CD4-positive, alpha-beta T cell (primary cell): ENCODE measurements at regions of chr1 and their contacts with region 1.

Region 1: DNA sequence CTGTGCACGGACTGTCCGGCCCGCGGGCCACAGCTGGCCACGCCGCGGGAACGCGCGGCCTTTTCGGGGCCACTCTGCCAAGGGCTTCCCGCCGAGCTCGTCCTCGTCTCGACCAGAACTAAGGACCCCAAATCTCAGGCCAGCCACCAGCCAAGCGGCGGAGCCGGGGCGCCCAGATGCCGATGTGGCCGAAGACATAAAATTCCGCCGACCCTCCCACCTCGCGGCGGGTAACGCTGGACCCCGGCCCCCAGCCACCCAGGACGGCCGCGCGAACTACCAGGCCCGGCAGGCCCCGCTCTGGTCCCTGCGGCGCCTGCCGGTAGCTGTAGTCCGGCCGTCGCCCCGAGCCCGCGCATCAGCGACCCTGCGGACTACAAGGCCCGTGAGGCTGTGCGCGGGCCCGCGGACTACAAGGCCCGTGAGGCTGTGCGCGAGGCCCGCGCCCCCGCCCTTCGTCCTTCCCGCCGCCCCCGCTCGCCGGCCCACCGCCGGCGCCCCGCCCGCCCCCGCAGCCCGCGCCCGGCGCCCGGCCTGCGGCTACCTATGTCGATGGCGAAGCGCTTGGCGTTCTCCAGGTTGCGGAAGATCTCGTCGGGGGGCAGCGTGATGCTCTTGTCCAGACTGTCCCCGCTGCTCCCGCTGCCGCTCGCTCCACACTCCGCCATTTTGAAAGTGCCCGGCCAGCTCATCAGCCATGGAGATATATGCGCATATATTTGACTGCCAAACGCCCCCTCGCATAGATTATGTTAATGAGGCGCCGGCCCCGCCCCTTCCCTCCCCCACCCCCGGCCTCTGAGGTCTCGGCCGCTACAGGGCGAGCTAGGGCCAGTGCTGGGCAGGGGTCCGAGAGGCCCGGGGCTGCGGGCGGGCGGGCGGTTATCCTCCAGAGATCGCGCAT is at the start of gene PANK4:
- DNase-seq: peak; percentile 76 to 96 (median 87)
- ATAC-seq: peak; percentile 89
- H3K4me3 ChIP-seq: peak within 1 kb of the TSS; percentile 84
- H3K4me3 Mint-ChIP-seq: peak within 1 kb of the TSS; percentile 90
- H3K27ac ChIP-seq: peak within 1 kb of the TSS; percentile 76
- H3K27ac Mint-ChIP-seq: peak within 1 kb of the TSS; percentile 91
- H3K4me1 ChIP-seq: peaks cover 75% of the 10 kb centered on the region
- H3K4me1 Mint-ChIP-seq: peaks cover 55% of the 10 kb centered on the region
- H3K27me3 ChIP-seq: peaks cover 19 to 23% of the 10 kb centered on the region in 2 experiments
- H3K27me3 Mint-ChIP-seq: peaks cover 19% of the 10 kb centered on the region
- CTCF ChIP-seq: no peak
- total RNA-seq, gene PANK4: 42.9 to 47.0 TPM

Region 2: GRCh38 chr1:1890506-1891348 is 635.4 kb before region 1 on chr1 and contains the start of gene GNB1:
- CTCF ChIA-PET with region 1: no interaction called
- POLR2A ChIA-PET with region 1: no interaction called
- intact Hi-C with region 1: no loop called
- DNase-seq: peak; percentile 73 to 97 (median 86)
- ATAC-seq: peak; percentile 67
- H3K4me3 ChIP-seq: peak within 1 kb of the TSS; percentile 77
- H3K4me3 Mint-ChIP-seq: peak within 1 kb of the TSS; percentile 92
- H3K27ac ChIP-seq: peak within 1 kb of the TSS; percentile 82 to 84
- H3K27ac Mint-ChIP-seq: peak within 1 kb of the TSS; percentile 98
- H3K4me1 ChIP-seq: peaks cover 77% of the 10 kb centered on the region
- H3K4me1 Mint-ChIP-seq: peaks cover 59% of the 10 kb centered on the region
- H3K27me3 ChIP-seq: no peaks in the 10 kb centered on the region
- H3K27me3 Mint-ChIP-seq: no peaks in the 10 kb centered on the region
- CTCF ChIP-seq: no peak
- total RNA-seq, gene GNB1: 138 to 149 TPM

Region 3: DNA sequence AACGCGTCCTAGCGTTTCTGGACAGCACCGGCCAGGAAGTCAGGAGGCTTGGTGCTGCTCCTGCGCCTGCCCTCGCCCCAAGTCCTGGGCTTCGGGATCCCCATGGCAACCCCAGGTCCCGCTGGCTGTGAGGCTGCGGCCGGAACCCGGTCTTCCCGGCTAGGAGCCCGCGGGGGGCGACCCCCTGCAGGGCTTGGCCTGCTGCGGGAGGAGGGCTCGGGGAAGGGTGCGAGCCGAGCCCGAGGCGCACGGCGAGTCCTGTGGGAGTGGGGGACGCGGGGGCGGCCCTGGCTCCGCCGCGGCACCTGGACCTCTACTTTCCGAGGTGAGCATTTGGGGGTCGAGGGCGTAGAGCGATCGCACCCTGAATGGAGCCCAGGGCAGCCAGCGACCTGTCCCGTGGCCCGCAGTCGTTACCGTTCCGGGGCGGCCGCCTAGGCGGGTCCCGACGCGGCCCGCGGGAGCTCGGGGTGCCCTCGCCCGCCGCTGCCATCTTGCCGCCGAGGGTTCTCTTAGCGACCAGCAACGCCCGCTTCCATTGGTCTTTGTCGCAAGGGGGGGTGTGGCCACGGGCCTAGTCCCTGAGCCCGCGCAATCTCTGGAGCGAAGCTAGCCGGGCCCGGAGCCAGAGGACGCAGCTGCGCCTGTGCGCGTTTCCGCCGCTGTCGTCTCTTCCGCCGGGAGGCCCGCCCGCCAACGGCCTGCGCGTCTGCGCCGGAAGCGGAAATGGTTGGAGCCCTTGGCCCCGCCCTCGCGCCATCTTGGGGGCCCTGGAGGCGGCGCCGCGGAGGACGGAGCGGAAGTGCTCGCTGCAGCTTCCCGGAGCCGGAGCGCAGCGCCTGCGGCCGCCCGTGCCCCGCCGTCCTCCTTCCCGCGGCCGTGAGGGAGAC is 134.9 kb before region 1 on chr1 and contains the starts of genes MORN1 and RER1:
- CTCF ChIA-PET with region 1: interaction called, 3 read pairs
- POLR2A ChIA-PET with region 1: interaction called, 19 read pairs
- intact Hi-C with region 1: loop called in 1 of 2 experiments (anchors 1 kb)
- DNase-seq: peak; percentile 97 to 100 (median 99)
- ATAC-seq: peak; percentile 95
- H3K4me3 ChIP-seq: peak within 1 kb of the TSS; percentile 64
- H3K4me3 Mint-ChIP-seq: peak within 1 kb of the TSS; percentile 95
- H3K27ac ChIP-seq: peak within 1 kb of the TSS; percentile 60 to 63
- H3K27ac Mint-ChIP-seq: peak within 1 kb of the TSS; percentile 88
- H3K4me1 ChIP-seq: peaks cover 45% of the 10 kb centered on the region
- H3K4me1 Mint-ChIP-seq: peaks cover 31% of the 10 kb centered on the region
- H3K27me3 ChIP-seq: no peaks in the 10 kb centered on the region
- H3K27me3 Mint-ChIP-seq: no peaks in the 10 kb centered on the region
- CTCF ChIP-seq: no peak
- total RNA-seq, gene MORN1: 5.3 to 6.5 TPM
- total RNA-seq, gene RER1: 57.9 to 60.7 TPM

Region 4: GRCh38 chr1:2459757-2460156 is 66.4 kb before region 1 on chr1:
- CTCF ChIA-PET with region 1: no interaction called
- POLR2A ChIA-PET with region 1: no interaction called
- intact Hi-C with region 1: no loop called
- DNase-seq: no peak
- ATAC-seq: no peak
- H3K4me3 ChIP-seq: no peak overlapping the region
- H3K4me3 Mint-ChIP-seq: no peak overlapping the region
- H3K27ac ChIP-seq: no peak overlapping the region
- H3K27ac Mint-ChIP-seq: no peak overlapping the region
- H3K4me1 ChIP-seq: no peaks in the 10 kb centered on the region
- H3K4me1 Mint-ChIP-seq: no peaks in the 10 kb centered on the region
- H3K27me3 ChIP-seq: peaks cover 0 to 9% of the 10 kb centered on the region in 2 experiments
- H3K27me3 Mint-ChIP-seq: peaks cover 6% of the 10 kb centered on the region
- CTCF ChIP-seq: no peak

Region 5: GRCh38 chr1:2514863-2515762 is 11.1 kb before region 1 on chr1:
- CTCF ChIA-PET with region 1: no interaction called
- POLR2A ChIA-PET with region 1: no interaction called
- intact Hi-C with region 1: no loop called
- DNase-seq: no peak
- ATAC-seq: no peak
- H3K4me3 ChIP-seq: no peak overlapping the region
- H3K4me3 Mint-ChIP-seq: no peak overlapping the region
- H3K27ac ChIP-seq: no peak overlapping the region
- H3K27ac Mint-ChIP-seq: no peak overlapping the region
- H3K4me1 ChIP-seq: no peaks in the 10 kb centered on the region
- H3K4me1 Mint-ChIP-seq: no peaks in the 10 kb centered on the region
- H3K27me3 ChIP-seq: no peaks in the 10 kb centered on the region
- H3K27me3 Mint-ChIP-seq: no peaks in the 10 kb centered on the region
- CTCF ChIP-seq: no peak

Region 6: GRCh38 chr1:2545759-2546514 is 19.8 kb after region 1 on chr1:
- CTCF ChIA-PET with region 1: interaction called, 37 read pairs
- POLR2A ChIA-PET with region 1: interaction called, 164 read pairs
- intact Hi-C with region 1: loop called (anchors 1 kb)
- DNase-seq: peak; percentile 82 to 97 (median 88)
- ATAC-seq: peak; percentile 45
- H3K4me3 ChIP-seq: peak overlapping the region; percentile 81
- H3K4me3 Mint-ChIP-seq: peak overlapping the region; percentile 95
- H3K27ac ChIP-seq: peak overlapping the region; percentile 96 to 99
- H3K27ac Mint-ChIP-seq: peak overlapping the region; percentile 99
- H3K4me1 ChIP-seq: peaks cover 70% of the 10 kb centered on the region
- H3K4me1 Mint-ChIP-seq: peaks cover 38% of the 10 kb centered on the region
- H3K27me3 ChIP-seq: peaks cover 0 to 2% of the 10 kb centered on the region in 2 experiments
- H3K27me3 Mint-ChIP-seq: no peaks in the 10 kb centered on the region
- CTCF ChIP-seq: no peak

Region 7: GRCh38 chr1:2575801-2576663 is 49.9 kb after region 1 on chr1:
- CTCF ChIA-PET with region 1: interaction called, 7 read pairs
- POLR2A ChIA-PET with region 1: interaction called, 3 read pairs
- intact Hi-C with region 1: loop called in 1 of 2 experiments (anchors 2 kb)
- DNase-seq: peak in 1 of 14 experiments; percentile 40
- ATAC-seq: no peak
- H3K4me3 ChIP-seq: no peak overlapping the region
- H3K4me3 Mint-ChIP-seq: no peak overlapping the region
- H3K27ac ChIP-seq: no peak overlapping the region
- H3K27ac Mint-ChIP-seq: peak overlapping the region; percentile 49
- H3K4me1 ChIP-seq: peaks cover 55% of the 10 kb centered on the region
- H3K4me1 Mint-ChIP-seq: peaks cover 44% of the 10 kb centered on the region
- H3K27me3 ChIP-seq: no peaks in the 10 kb centered on the region
- H3K27me3 Mint-ChIP-seq: no peaks in the 10 kb centered on the region
- CTCF ChIP-seq: no peak

Region 8: GRCh38 chr1:2642560-2643413 is 116.6 kb after region 1 on chr1:
- CTCF ChIA-PET with region 1: no interaction called
- POLR2A ChIA-PET with region 1: no interaction called
- intact Hi-C with region 1: loop called (anchors 5 to 10 kb)
- DNase-seq: peak; percentile 89 to 97 (median 94)
- ATAC-seq: peak; percentile 84
- H3K4me3 ChIP-seq: peak overlapping the region; percentile 61
- H3K4me3 Mint-ChIP-seq: peak overlapping the region; percentile 89
- H3K27ac ChIP-seq: peak overlapping the region; percentile 69 to 96
- H3K27ac Mint-ChIP-seq: peak overlapping the region; percentile 89
- H3K4me1 ChIP-seq: peaks cover 29% of the 10 kb centered on the region
- H3K4me1 Mint-ChIP-seq: peaks cover 12% of the 10 kb centered on the region
- H3K27me3 ChIP-seq: no peaks in the 10 kb centered on the region
- H3K27me3 Mint-ChIP-seq: no peaks in the 10 kb centered on the region
- CTCF ChIP-seq: no peak